ENCODE measurements at regions of chr11 and their contacts with region 1.

Region 1: DNA sequence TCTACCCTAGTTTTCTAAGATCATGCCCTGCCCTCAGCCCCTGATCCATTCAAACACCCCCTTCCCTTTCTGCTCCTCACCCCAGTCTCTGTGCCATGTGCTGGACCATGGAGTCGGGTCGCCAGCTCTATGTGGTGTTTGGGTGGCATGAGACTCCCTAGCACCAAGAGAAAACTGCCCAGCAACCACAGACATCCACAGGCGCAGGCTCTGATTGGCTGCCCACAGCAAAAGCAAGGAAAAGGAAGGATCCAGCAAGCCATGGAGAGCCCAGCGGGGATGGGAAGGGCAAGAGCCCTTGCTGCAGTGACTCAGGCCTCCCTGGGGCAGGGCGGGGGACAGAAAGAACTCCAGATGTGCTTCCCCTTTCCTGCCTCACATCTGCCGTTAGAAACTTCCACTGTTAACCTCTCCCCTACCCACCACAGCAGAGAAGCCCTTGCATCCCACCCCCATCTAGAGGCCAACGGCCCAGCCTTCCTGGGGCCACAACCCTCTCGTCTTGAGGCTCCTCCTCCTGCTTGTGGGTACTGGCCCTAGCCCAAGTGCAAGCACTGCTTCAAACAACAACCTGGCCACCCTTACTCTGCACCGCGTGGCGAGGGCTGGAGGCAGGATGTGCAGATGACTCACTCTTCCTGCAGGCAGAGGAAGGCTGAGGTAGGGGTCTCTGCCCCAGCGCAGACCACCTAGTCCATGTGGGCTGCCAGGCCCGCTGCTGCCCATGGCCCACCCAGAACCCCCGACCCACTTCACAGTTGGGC is 9.7 kb upstream of the AHNAK start:
- DNase-seq: peak; percentile 97
- H3K4me3 Mint-ChIP-seq: peak overlapping the region; percentile 70
- H3K27ac Mint-ChIP-seq: peak overlapping the region; percentile 95
- H3K4me1 Mint-ChIP-seq: peaks cover 66% of the 10 kb centered on the region
- H3K27me3 Mint-ChIP-seq: no peaks in the 10 kb centered on the region
- CTCF ChIP-seq: no peak

Region 2: DNA sequence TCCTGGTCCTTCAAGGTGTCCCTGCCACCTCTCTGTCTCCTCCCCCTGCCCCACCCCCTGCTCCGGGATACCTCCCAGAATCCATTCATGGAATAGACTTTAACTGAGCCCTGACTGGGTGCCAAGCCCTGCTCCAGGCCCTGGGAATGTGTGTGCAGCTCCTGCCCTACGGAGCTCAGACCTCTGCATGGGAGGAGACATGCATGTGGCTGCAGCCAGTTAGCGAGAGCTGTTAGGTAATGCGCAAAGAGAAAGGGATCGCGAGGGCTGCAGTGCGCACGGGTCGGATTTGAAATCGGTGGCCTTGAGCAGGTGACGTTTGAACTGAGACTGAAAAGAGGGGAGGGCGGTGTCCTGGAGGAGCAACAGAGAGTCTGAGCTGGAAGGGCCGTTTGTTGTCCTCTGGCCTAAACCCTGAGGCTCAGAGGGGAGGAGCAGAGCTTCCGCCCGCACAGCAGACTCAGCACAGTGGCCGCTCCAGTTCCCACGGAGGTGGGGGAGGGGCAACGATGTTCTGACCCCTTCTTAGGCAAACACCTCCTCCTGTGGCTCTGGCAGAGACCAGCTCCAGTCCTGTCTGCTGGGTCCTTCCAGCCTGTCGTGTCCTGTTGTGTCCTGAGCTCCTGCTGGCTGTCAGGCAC is 1067.5 kb before region 1 on chr11:
- CTCF ChIA-PET with region 1: no interaction called
- POLR2A ChIA-PET with region 1: no interaction called
- intact Hi-C with region 1: no loop called
- DNase-seq: no peak
- H3K4me3 Mint-ChIP-seq: peak overlapping the region; percentile 4
- H3K27ac Mint-ChIP-seq: no peak overlapping the region
- H3K4me1 Mint-ChIP-seq: peaks cover 7% of the 10 kb centered on the region
- H3K27me3 Mint-ChIP-seq: peaks cover 1% of the 10 kb centered on the region
- CTCF ChIP-seq: no peak

Region 3: DNA sequence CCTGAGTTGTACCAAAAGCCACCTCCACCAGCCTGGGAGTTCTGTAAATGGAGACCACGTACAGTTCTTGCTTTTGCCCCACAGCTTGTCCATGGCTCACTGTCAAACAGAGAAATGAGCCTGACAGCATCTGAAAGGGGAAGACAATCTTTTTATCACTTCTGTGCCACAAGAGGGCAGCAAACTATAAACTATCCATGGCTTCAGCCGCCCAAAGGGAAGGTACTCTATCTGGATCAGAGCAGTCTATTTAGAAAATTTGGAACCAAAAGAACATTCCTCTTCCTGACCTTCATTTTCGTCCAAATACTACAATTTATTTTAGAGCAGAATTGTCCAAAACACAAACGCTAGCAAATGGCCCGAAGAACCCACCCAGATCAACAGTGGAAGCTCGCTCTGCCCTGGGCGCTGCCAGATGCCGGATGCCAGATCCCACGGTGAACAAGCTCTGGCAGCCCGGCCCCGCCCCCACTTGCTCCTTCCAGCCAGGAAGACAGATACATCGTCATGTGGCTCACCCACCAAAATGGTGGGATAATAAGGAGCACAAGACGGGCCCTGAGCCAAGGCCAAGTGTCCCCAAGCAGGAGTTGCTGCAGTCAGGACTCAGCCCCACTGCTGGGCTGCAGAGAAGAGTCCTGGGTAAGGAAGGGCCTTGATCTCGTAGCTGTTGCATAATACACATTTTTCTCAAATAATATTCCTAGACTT is 161.3 kb before region 1 on chr11:
- CTCF ChIA-PET with region 1: interaction called, 87 read pairs
- POLR2A ChIA-PET with region 1: interaction called, 23 read pairs
- intact Hi-C with region 1: loop called (anchors 1 kb)
- DNase-seq: peak; percentile 88
- H3K4me3 Mint-ChIP-seq: peak overlapping the region; percentile 73
- H3K27ac Mint-ChIP-seq: peak overlapping the region; percentile 29
- H3K4me1 Mint-ChIP-seq: peaks cover 11% of the 10 kb centered on the region
- H3K27me3 Mint-ChIP-seq: no peaks in the 10 kb centered on the region
- CTCF ChIP-seq: peak; percentile 76

Region 4: DNA sequence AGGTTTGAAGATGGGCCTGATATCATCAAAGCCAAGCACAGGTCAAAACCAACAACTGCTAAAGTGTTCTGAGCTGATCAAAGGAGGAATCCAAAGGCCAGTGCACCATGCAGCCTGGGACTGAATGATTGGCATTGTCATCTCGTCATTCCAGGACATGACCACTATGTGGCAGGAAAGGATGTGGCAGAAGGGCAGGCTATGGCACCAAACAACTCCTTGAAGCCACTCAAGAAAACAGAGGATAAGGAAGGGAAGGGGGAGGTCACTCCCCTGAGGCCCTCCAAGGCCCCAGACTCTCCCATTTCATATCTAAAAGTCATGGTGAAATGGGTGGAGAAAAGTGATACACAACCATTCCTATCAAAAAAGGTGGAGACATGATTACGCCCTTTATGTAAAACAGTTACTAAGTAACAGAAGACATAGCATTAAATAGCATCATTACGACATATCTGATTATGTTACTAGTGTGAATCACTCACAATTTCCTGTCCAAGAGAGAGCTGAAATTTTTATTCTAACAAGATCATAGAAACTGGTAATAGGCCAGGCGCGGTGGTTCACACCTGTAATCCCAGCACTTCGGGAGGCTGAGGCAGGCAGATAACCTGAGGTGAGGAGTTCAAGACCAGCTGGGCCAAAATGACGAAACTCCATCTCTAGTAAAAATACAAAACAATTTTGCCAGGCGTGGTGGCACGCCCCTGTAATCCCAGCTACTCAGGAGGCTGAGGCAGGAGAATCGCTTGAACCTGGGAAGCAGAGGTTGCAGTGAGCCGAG is 59.0 kb before region 1 on chr11:
- CTCF ChIA-PET with region 1: interaction called, 10 read pairs
- POLR2A ChIA-PET with region 1: interaction called, 20 read pairs
- intact Hi-C with region 1: loop called (anchors 1 kb)
- DNase-seq: peak; percentile 83
- H3K4me3 Mint-ChIP-seq: no peak overlapping the region
- H3K27ac Mint-ChIP-seq: peak overlapping the region; percentile 60
- H3K4me1 Mint-ChIP-seq: peaks cover 28% of the 10 kb centered on the region
- H3K27me3 Mint-ChIP-seq: no peaks in the 10 kb centered on the region
- CTCF ChIP-seq: peak; percentile 41

Region 5: GRCh38 chr11:62573592-62574362 is 17.5 kb after region 1 on chr11 and contains the start of gene EEF1G:
- CTCF ChIA-PET with region 1: interaction called, 14 read pairs
- POLR2A ChIA-PET with region 1: interaction called, 29 read pairs
- intact Hi-C with region 1: no loop called
- DNase-seq: peak; percentile 100
- H3K4me3 Mint-ChIP-seq: peak within 1 kb of the TSS; percentile 100
- H3K27ac Mint-ChIP-seq: peak within 1 kb of the TSS; percentile 100
- H3K4me1 Mint-ChIP-seq: peaks cover 30% of the 10 kb centered on the region
- H3K27me3 Mint-ChIP-seq: no peaks in the 10 kb centered on the region
- CTCF ChIP-seq: no peak
- total RNA-seq, gene EEF1G: 1,510 and 1,855 TPM in 2 replicates

Region 6: DNA sequence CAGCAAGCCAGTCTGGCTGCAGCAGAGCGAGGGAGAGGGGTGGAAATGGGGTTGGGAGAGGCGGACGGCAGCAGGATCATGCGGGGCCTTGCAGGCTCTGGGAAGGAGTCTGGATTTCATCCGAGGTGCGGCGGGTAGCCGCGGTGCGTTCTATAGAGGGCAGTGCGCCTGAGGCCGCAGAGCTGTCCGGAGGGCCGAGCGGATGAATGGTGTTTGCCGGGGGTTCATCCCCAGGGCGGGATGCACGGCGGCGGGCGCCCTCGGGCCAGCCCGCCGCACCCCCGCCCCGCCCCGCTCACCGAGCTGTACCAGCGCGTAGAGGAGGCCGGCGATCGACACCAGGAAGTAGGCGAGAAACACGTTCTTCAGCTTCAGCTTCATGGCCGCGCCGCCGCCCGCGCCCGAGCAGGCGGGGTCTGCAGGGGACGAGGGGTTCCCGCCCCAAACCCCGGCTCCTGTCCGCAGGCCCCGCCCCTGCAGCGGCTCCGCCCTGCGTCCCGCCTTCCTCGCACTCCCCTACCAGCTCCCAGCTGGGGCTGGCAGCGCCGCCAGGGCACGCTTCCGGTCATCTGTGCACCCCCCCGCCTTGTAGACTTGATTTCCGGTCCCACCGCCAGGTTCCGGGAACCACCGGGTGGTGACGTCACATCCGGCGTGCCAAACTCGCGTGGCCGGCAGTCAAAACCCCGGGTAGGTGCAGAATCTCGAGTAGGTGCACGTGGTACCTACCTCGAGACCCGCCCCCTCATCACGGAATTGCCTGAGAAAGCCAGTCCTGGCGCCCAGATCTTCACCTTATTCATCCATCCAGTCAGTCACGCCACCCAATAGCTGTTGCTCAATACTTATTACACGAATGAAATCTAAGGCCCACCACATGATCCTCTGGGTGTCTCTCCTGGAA is 65.5 kb after region 1 on chr11 and contains the start of gene B3GAT3:
- CTCF ChIA-PET with region 1: interaction called, 4 read pairs
- POLR2A ChIA-PET with region 1: interaction called, 15 read pairs
- intact Hi-C with region 1: no loop called
- DNase-seq: peak; percentile 98
- H3K4me3 Mint-ChIP-seq: peak within 1 kb of the TSS; percentile 97
- H3K27ac Mint-ChIP-seq: peak within 1 kb of the TSS; percentile 92
- H3K4me1 Mint-ChIP-seq: peaks cover 12% of the 10 kb centered on the region
- H3K27me3 Mint-ChIP-seq: no peaks in the 10 kb centered on the region
- CTCF ChIP-seq: no peak
- total RNA-seq, gene B3GAT3: 40.1 and 42.4 TPM in 2 replicates

Region 7: GRCh38 chr11:63243533-63243932 is 687.2 kb after region 1 on chr11 and contains the start of gene SLC22A25:
- CTCF ChIA-PET with region 1: no interaction called
- POLR2A ChIA-PET with region 1: no interaction called
- intact Hi-C with region 1: no loop called
- DNase-seq: peak; percentile 35
- H3K4me3 Mint-ChIP-seq: no peak within 1 kb of the TSS
- H3K27ac Mint-ChIP-seq: no peak within 1 kb of the TSS
- H3K4me1 Mint-ChIP-seq: no peaks in the 10 kb centered on the region
- H3K27me3 Mint-ChIP-seq: peaks cover 17% of the 10 kb centered on the region
- CTCF ChIP-seq: no peak
- total RNA-seq, gene SLC22A25: not detected in 2 replicates

Measured in MCF 10A (cell line).